Activated CD4-positive, alpha-beta T cell treated with anti-CD3 and anti-CD28 coated beads for 36 hours (primary cell): ENCODE measurements at regions of chr5 and their contacts with region 1.

Region 1: DNA sequence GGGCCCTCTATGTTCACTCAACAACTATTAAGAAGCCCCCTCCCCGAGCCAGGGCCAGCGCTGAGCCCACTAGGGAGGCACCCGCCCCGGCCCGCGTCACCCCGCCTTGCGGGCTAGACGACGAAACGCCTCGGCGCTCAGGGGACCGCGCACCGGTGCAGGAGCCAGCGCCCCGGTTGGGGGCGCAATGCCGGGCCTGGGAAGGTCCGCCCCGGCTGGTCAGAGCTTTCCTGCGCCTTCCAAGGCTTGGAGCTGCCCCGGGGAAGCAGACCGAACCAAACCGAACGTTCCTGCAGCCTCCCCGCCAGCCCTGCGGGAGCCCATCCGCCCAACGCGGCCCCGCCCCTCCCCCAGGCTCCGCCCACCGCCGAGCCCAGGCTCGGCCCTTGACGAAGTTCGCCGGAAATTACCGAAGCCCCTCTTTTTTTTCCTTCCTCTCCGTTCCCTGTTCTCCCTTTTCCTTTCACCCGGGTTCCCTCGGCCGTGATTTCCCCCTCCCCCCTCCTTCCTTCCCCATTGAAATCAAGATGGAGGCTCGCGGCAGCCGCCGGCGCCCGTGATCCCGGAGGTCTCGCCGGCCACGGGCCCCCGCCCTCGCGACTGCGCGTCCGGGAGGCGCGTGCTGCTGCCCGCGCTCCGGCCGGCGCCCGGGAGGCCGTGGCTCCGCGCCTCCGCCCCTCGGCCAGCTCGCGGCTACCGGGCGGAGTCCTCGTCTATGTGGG is at the start of gene TRIO:
- DNase-seq: peak; percentile 88
- ATAC-seq: peak; percentile 76
- H3K4me3 Mint-ChIP-seq: peak within 1 kb of the TSS; percentile 75
- H3K27ac Mint-ChIP-seq: peak within 1 kb of the TSS; percentile 78
- H3K4me1 Mint-ChIP-seq: peaks cover 7% of the 10 kb centered on the region
- H3K27me3 Mint-ChIP-seq: peaks cover 38% of the 10 kb centered on the region
- total RNA-seq, gene TRIO: 9.2 to 11.3 TPM

Region 2: GRCh38 chr5:13814302-13814701 is 328.7 kb before region 1 on chr5:
- CTCF ChIA-PET with region 1: no interaction called
- POLR2A ChIA-PET with region 1: no interaction called
- intact Hi-C with region 1: no loop called
- DNase-seq: no peak
- ATAC-seq: no peak
- H3K4me3 Mint-ChIP-seq: no peak overlapping the region
- H3K27ac Mint-ChIP-seq: no peak overlapping the region
- H3K4me1 Mint-ChIP-seq: no peaks in the 10 kb centered on the region
- H3K27me3 Mint-ChIP-seq: no peaks in the 10 kb centered on the region

Region 3: GRCh38 chr5:14011089-14012004 is 131.6 kb before region 1 on chr5:
- CTCF ChIA-PET with region 1: no interaction called
- POLR2A ChIA-PET with region 1: no interaction called
- intact Hi-C with region 1: loop called in 1 of 2 experiments (anchors 1 kb)
- DNase-seq: peak; percentile 77
- ATAC-seq: peak; percentile 95
- H3K4me3 Mint-ChIP-seq: peak overlapping the region; percentile 71
- H3K27ac Mint-ChIP-seq: no peak overlapping the region
- H3K4me1 Mint-ChIP-seq: peaks cover 8% of the 10 kb centered on the region
- H3K27me3 Mint-ChIP-seq: peaks cover 22% of the 10 kb centered on the region

Region 4: DNA sequence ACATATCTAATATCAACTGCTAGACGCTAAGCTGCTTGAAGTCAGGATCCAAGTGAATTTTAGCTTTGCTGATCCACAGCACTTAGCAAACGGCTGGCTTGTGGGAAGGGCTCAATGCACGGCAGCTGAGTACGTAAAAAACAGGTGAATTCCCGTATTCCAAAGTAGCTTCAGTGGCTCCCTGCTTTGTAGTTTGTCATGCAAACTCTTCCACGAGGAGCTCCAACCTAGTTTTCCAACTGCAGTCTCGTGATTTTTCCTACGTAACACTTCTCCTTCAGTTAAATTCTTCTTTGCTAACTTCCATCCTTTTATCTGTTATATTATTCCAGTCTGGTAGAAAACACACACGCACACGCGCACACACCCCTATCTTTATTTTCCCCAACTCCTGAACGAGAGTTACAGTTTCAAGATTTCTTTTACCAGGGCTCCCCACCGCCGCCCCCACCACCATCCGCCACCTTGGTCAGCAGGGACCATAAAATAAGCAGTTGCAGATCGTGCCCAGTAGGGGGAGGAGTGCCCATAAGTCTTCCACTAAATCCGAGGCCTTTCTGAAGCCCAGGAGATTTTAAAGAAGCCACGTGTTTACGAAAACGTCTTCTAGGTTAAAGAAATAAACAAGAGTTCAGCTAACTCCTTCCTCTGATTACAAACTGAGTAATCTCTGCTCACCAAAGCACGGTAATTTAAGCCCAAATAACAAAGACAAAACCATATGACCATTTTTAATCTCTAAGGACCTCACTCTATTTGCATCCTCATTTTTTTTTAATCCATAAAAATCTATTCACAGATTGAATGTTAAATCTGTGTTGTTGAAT is 34.6 kb before region 1 on chr5:
- CTCF ChIA-PET with region 1: no interaction called
- POLR2A ChIA-PET with region 1: no interaction called
- intact Hi-C with region 1: loop called (anchors 1 kb)
- DNase-seq: peak; percentile 57
- ATAC-seq: peak; percentile 47
- H3K4me3 Mint-ChIP-seq: no peak overlapping the region
- H3K27ac Mint-ChIP-seq: peak overlapping the region; percentile 38
- H3K4me1 Mint-ChIP-seq: peaks cover 15% of the 10 kb centered on the region
- H3K27me3 Mint-ChIP-seq: peaks cover 17% of the 10 kb centered on the region

Region 5: DNA sequence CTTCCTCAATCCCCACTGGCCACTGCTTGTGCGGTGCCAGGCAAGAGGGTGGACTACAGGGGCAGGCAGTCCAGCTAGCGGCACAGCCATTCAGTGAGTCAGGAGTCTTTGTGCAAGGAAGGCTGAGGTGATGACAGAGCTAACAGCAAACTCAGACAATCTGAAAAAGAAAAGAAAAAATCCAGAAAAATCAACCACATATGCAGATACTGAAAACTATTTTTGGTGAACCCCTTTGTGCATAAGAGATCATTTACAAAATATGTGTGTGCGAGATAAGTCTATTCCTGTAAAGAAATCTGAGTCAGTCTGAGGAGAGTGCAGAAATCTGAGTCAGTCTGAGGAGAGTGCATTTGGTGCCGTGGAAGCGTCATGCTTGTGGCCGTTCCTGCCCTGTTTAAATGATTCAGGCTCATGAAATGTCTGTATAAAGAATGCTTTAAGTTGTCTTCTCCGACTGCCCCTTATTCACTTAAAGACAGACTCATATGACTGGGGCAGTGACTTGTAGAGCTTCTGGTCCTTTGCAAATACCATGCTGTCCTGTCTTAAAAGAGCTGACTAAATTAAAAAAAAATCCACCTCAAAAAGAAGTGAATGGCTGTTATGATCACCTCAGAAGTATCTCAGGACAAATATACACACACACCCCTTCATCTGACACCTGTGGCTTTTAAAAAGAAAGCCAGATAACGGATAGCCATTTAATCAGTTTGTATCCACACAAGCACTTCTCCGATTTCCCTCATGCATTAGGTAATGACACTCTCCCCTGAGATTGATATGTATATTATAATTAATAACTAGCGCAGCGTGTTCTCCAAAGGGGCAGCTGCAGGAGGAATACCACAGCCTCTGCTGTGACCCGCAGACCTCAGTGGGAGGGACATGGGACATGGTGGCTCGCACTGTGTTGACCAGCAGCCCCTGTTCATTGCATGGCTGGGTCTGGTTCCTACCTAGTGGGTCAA is 47.5 kb after region 1 on chr5:
- CTCF ChIA-PET with region 1: no interaction called
- POLR2A ChIA-PET with region 1: no interaction called
- intact Hi-C with region 1: no loop called
- DNase-seq: no peak
- ATAC-seq: peak; percentile 63
- H3K4me3 Mint-ChIP-seq: no peak overlapping the region
- H3K27ac Mint-ChIP-seq: no peak overlapping the region
- H3K4me1 Mint-ChIP-seq: no peaks in the 10 kb centered on the region
- H3K27me3 Mint-ChIP-seq: peaks cover 2% of the 10 kb centered on the region

Region 6: DNA sequence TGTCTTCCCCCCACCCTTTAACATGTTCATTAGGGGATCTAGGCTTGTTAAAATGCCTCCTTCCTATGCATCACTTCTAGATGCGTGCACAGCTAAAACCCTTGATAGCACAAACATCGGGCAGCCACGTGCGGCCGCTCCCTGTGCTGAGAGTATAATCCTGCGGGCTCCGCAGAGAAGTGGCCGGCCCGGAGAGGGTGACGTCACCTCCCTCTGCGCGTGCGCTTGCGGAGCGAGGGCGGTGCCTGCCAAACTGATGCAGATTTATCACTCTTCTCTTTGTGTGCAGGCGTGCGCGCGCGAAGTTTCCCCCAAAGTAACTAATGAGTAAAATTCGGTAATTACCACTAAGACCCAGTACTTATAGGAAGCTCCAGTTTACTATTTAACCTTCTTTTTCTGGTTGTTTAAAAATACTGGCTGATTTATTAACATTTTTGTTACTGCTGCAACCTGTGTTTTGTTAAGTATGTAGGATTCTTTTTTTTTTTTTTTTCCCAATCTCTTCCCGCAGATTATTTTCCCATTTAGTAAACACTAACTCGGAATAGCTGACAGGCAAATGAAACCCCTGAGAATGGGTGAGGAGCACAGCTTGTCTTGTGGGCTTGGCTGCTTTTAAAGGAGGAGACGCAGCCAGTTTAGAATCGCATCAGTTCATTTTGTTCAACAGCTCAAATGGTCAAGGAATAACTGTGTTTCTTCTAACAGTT is 121.8 kb after region 1 on chr5:
- CTCF ChIA-PET with region 1: interaction called, 3 read pairs
- POLR2A ChIA-PET with region 1: no interaction called
- intact Hi-C with region 1: loop called (anchors 1 to 10 kb)
- DNase-seq: peak; percentile 91
- ATAC-seq: peak; percentile 100
- H3K4me3 Mint-ChIP-seq: peak overlapping the region; percentile 35
- H3K27ac Mint-ChIP-seq: no peak overlapping the region
- H3K4me1 Mint-ChIP-seq: peaks cover 21% of the 10 kb centered on the region
- H3K27me3 Mint-ChIP-seq: peaks cover 16% of the 10 kb centered on the region

Region 7: DNA sequence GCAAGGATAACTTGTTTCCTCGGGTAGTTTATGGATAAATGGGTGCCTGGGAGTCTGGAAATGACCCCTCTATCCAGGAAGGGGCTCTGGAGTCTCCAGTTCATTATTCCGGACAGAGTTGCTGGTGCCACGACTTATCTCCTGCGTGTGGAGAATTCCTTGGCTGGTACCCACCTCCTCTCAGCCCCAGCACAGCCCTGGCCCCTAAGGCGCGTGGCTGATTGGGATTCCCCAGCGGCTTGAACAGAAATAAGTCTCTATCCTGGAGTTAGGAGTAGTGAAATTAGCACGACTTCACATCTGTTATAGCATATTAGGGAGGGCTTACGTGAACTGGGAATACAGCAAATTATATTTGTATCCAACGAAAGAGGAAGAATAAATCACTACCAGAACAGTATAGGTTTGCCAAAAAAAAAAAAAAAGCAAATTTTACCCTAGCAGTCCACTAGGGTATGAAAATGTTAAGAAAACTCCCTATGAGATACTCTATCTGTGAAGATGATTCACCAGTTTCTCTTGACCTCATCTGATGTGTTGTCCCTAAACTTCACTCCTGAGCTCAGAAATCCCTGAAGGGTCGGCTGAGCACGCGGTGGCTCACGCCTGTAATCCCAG is 266.1 kb after region 1 on chr5:
- CTCF ChIA-PET with region 1: no interaction called
- POLR2A ChIA-PET with region 1: no interaction called
- intact Hi-C with region 1: loop called in 1 of 2 experiments (anchors 5 kb)
- DNase-seq: no peak
- ATAC-seq: no peak
- H3K4me3 Mint-ChIP-seq: no peak overlapping the region
- H3K27ac Mint-ChIP-seq: no peak overlapping the region
- H3K4me1 Mint-ChIP-seq: peaks cover 14% of the 10 kb centered on the region
- H3K27me3 Mint-ChIP-seq: no peaks in the 10 kb centered on the region